Panc1 (cell line): ENCODE measurements at regions of chr5 and their contacts with region 1.

Region 1: GRCh38 chr5:78269088-78269703 is 25.3 kb downstream of the AP3B1 start:
- DNase-seq: no peak
- ATAC-seq: no peak
- H3K4me3 ChIP-seq: no peak overlapping the region
- H3K27ac ChIP-seq: no peak overlapping the region
- H3K4me1 ChIP-seq: no peaks in the 10 kb centered on the region
- H3K27me3 ChIP-seq: no peaks in the 10 kb centered on the region
- CTCF ChIP-seq: peak; percentile 23; the same call in 1 of the 2 replicates

Region 2: DNA sequence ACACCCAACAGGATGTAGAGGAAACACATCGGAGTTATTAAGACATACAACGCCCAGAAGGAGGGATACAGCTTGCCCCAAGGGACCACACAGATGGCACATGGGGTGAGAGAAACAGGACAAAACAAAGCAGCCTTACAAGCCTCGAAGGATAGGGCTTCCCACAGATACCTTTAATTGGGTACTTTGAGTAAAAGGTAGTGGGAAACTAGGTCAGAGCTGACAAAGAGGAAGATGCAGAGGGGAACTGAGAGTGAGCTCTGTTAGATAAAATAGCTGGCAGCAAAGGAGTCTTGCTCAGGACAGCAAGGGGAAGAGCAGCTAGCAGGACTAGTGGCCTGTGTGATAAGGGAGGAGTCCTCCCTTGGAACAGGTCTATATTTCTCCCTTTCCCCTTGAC is 678.8 kb before region 1 on chr5:
- CTCF ChIA-PET with region 1: no interaction called
- POLR2A ChIA-PET with region 1: no interaction called
- in situ Hi-C with region 1: no loop called
- intact Hi-C with region 1: no loop called
- DNase-seq: no peak
- ATAC-seq: no peak
- H3K4me3 ChIP-seq: no peak overlapping the region
- H3K27ac ChIP-seq: no peak overlapping the region
- H3K4me1 ChIP-seq: no peaks in the 10 kb centered on the region
- H3K27me3 ChIP-seq: peaks cover 14% of the 10 kb centered on the region
- CTCF ChIP-seq: no peak; the same call in 1 of the 2 replicates

Region 3: DNA sequence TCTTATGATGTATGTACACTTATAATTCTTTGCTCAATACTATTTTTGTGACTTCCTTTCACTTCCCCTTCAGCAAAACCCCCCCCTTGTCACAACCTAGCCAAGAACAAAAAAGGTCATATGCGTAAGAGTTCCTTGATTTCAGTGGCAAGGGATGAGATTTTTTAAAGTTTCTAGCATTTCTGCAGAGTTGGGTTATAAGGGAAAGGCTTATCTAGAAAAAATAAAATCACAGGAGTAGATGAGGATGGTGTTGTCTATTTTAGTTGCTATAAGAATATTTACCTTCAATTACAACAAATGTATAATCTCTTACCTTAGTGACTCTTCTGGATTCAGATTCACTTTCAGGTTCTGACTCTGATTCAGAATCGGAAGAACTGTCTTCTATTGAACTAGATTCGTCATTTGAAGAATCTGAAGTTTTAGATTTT is 159.3 kb before region 1 on chr5:
- CTCF ChIA-PET with region 1: no interaction called
- POLR2A ChIA-PET with region 1: no interaction called
- in situ Hi-C with region 1: no loop called
- intact Hi-C with region 1: no loop called
- DNase-seq: no peak
- ATAC-seq: no peak
- H3K4me3 ChIP-seq: no peak overlapping the region
- H3K27ac ChIP-seq: no peak overlapping the region
- H3K4me1 ChIP-seq: no peaks in the 10 kb centered on the region
- H3K27me3 ChIP-seq: no peaks in the 10 kb centered on the region
- CTCF ChIP-seq: no peak

Region 4: DNA sequence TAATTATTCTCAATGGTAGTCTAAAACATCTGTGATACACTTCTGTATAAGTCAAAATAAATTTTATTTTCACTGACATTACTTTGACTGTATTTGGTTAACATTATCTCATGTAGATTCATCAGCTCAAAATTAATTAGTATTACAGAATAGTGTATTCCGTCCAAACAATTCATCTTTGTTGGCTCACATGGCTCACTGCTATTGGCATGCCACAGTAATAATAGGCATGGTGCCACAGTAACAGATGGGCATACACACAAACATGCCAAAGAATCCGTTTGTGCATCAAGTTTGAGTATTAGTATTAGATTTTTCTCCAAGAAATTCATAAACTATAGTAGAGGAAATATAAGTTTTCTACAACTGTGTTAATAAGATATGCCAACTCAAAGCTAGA is 11.1 kb after region 1 on chr5:
- CTCF ChIA-PET with region 1: no interaction called
- POLR2A ChIA-PET with region 1: interaction called, 11 read pairs
- in situ Hi-C with region 1: no loop called
- intact Hi-C with region 1: no loop called
- DNase-seq: no peak
- ATAC-seq: no peak
- H3K4me3 ChIP-seq: no peak overlapping the region
- H3K27ac ChIP-seq: no peak overlapping the region
- H3K4me1 ChIP-seq: no peaks in the 10 kb centered on the region
- H3K27me3 ChIP-seq: no peaks in the 10 kb centered on the region
- CTCF ChIP-seq: no peak

Region 5: GRCh38 chr5:78387468-78388153 is 118.4 kb after region 1 on chr5:
- CTCF ChIA-PET with region 1: no interaction called
- POLR2A ChIA-PET with region 1: no interaction called
- in situ Hi-C with region 1: no loop called
- intact Hi-C with region 1: no loop called
- DNase-seq: no peak
- ATAC-seq: no peak
- H3K4me3 ChIP-seq: no peak overlapping the region
- H3K27ac ChIP-seq: no peak overlapping the region
- H3K4me1 ChIP-seq: no peaks in the 10 kb centered on the region
- H3K27me3 ChIP-seq: no peaks in the 10 kb centered on the region
- CTCF ChIP-seq: no peak